Activated CD8-positive, alpha-beta T cell treated with anti-CD3 and anti-CD28 coated beads for 36 hours (primary cell): ENCODE measurements at regions of chr5 and their contacts with region 1.

Region 1: GRCh38 chr5:138568061-138568824 is 7.0 kb downstream of the HSPA9 start:
- DNase-seq: no peak
- ATAC-seq: no peak
- H3K4me3 Mint-ChIP-seq: no peak overlapping the region
- H3K27ac Mint-ChIP-seq: peak overlapping the region; percentile 82
- H3K4me1 Mint-ChIP-seq: peaks cover 81% of the 10 kb centered on the region
- H3K27me3 Mint-ChIP-seq: no peaks in the 10 kb centered on the region
- CTCF ChIP-seq: peak; percentile 32

Region 2: DNA sequence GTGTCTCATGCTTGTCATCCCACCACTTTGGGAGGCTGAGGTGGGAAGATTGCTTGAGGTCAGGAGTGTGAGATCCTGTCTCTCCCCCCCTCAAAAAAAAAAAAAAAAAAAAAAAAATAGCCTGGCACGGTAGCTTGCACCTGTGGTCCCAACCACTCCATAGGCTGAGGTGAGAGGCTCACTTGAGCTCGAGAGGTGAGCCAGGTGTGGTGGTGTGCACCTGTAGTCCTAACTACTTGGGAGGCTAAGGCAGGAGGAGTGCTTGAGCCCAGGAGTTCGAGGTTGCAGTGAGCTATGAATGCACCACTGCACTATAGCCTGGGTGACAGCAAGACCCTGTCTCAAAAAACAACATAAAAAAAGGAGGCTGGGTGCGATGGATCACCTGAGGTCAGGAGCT is 15.5 kb before region 1 on chr5:
- CTCF ChIA-PET with region 1: interaction called, 20 read pairs
- POLR2A ChIA-PET with region 1: interaction called, 31 read pairs
- intact Hi-C with region 1: no loop called
- DNase-seq: no peak
- ATAC-seq: no peak
- H3K4me3 Mint-ChIP-seq: no peak overlapping the region
- H3K27ac Mint-ChIP-seq: no peak overlapping the region
- H3K4me1 Mint-ChIP-seq: peaks cover 12% of the 10 kb centered on the region
- H3K27me3 Mint-ChIP-seq: no peaks in the 10 kb centered on the region
- CTCF ChIP-seq: no peak

Region 3: DNA sequence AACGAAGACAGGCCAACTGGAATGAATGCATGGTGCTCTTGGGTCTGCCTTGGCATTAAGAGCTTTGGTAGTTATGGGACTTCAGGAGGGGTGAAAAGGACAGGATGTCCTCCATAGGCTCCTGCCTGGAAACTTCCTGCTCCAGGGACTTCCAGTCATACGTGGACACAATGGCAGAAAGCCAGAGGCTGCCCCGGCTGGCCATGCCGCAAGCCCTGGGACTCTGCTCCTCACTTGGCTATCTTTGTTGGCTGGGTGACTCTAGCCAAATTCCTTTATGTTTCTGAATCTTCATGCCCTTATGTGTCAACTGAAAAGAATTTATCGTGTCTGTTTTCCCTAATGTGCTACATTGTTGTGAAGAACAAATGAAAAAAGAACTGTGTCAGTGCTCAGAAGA is 493.0 kb after region 1 on chr5:
- CTCF ChIA-PET with region 1: no interaction called
- POLR2A ChIA-PET with region 1: no interaction called
- intact Hi-C with region 1: no loop called
- DNase-seq: no peak
- ATAC-seq: no peak
- H3K4me3 Mint-ChIP-seq: no peak overlapping the region
- H3K27ac Mint-ChIP-seq: no peak overlapping the region
- H3K4me1 Mint-ChIP-seq: no peaks in the 10 kb centered on the region
- H3K27me3 Mint-ChIP-seq: no peaks in the 10 kb centered on the region
- CTCF ChIP-seq: no peak